Left cardiac atrium (tissue), 4 donors: ENCODE measurements at regions of chr2 and their contacts with region 1.

Region 1: GRCh38 chr2:9205963-9206948 is at the start of gene ASAP2:
- DNase-seq: peak; percentile 81
- ATAC-seq: peak; percentile 78 to 88
- total RNA-seq, gene ASAP2: 13.4 to 18.2 TPM

Region 2: DNA sequence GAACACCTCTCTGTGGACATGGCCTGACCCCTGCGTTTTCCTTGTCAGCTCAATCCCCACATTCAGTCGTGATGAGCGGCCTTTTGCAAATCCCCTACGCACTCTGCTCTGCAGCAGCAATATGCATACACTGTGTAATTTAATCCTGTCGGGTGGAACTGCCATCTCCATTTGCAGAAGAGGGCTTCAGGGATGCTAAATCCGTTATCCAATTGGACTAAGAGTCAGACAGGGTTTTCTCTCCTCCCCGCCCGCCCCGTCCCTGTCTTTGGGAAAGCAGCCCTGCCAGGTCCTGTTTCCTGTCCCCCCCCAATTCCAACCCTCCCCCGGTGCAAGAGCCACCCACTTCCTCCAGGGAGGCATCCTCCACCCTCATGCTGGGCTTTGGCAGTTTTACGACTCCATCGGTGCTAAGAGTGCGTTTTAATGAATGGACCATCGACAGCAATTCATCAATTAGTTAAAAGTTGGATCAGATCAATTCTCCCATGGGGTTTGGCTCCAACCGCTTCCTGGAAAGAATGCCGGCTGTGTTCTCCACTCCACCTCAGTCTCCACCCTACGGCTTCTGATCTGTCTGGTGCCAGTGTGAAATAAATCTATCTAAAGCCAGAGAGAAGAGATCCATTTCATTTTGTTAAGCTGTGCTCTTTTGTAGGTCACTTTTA is 53.1 kb before region 1 on chr2:
- intact Hi-C with region 1: loop called in 1 of 2 experiments (anchors 10 kb)
- DNase-seq: no peak
- ATAC-seq: peak; percentile 28 to 72

Region 3: DNA sequence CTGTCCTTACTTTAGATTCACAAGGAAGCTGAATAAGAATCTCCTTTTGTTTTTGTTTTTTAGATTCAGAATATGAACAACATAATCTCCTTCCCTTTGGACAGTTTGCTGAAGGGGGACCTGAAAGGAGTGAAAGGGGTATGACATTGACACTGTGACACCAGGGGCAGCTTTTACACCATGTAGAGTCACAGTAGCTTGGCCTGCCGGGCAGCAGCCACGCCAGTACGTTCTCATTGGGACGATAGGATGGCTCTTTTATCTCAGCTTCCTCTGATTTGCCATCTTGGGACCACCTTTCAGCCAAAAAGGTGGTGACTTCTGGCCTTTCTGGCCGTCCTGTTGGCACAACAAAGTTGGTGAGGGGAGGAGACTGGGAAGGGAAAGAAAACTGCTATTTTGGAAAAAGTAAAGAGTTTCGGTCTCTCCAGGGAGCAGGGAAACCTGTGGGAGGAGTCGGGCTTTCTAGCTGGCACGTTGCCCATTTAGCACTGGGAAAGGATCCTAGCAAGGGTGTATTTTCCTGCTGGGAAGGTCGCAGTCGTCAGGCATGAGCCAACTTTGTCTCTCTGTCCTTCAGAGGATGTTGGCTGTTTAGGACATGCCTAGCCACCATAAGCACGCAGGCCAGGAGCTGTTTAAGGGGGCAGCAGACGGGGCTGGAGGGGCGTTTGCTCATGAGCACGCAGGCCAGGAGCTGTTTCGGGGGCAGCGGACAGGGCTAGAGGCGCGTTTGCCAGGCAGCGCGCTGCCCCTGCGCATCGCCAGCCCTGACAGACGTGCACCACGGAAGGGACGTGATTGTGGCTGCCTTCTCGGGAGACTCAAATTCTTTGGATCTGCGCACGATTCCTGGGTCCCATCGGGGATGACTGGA is 112.4 kb after region 1 on chr2:
- intact Hi-C with region 1: loop called in 1 of 2 experiments (anchors 5 kb)
- DNase-seq: peak; percentile 82
- ATAC-seq: peak; percentile 75 to 80